ENCODE measurements at regions of chr7 and their contacts with region 1.

Region 1: GRCh38 chr7:65373608-65374351 is at the start of gene ZNF92:
- DNase-seq: peak; percentile 99
- H3K4me3 Mint-ChIP-seq: peak within 1 kb of the TSS; percentile 94
- H3K27ac Mint-ChIP-seq: peak within 1 kb of the TSS; percentile 90
- H3K4me1 Mint-ChIP-seq: peaks cover 32% of the 10 kb centered on the region
- H3K27me3 Mint-ChIP-seq: no peaks in the 10 kb centered on the region
- total RNA-seq, gene ZNF92: 13.6 to 15.5 TPM

Region 2: GRCh38 chr7:63900394-63901203 is 1473.2 kb before region 1 on chr7:
- CTCF ChIA-PET with region 1: no interaction called
- intact Hi-C with region 1: loop called (anchors 2 kb)
- DNase-seq: peak; percentile 95
- H3K4me3 Mint-ChIP-seq: peak overlapping the region; percentile 93
- H3K27ac Mint-ChIP-seq: peak overlapping the region; percentile 77
- H3K4me1 Mint-ChIP-seq: peaks cover 8% of the 10 kb centered on the region
- H3K27me3 Mint-ChIP-seq: no peaks in the 10 kb centered on the region

Region 3: GRCh38 chr7:64665980-64666662 is 707.7 kb before region 1 on chr7 and contains the start of gene ZNF107:
- CTCF ChIA-PET with region 1: no interaction called
- intact Hi-C with region 1: loop called (anchors 5 kb)
- DNase-seq: peak; percentile 93
- H3K4me3 Mint-ChIP-seq: peak within 1 kb of the TSS; percentile 95
- H3K27ac Mint-ChIP-seq: peak within 1 kb of the TSS; percentile 96
- H3K4me1 Mint-ChIP-seq: peaks cover 47% of the 10 kb centered on the region
- H3K27me3 Mint-ChIP-seq: no peaks in the 10 kb centered on the region
- total RNA-seq, gene ZNF107: 7.7 to 8.0 TPM

Region 4: GRCh38 chr7:65006094-65006992 is 367.4 kb before region 1 on chr7 and contains the start of gene ERV3-1:
- CTCF ChIA-PET with region 1: no interaction called
- intact Hi-C with region 1: loop called (anchors 1 kb)
- DNase-seq: peak; percentile 97
- H3K4me3 Mint-ChIP-seq: peak within 1 kb of the TSS; percentile 93
- H3K27ac Mint-ChIP-seq: peak within 1 kb of the TSS; percentile 85
- H3K4me1 Mint-ChIP-seq: peaks cover 28% of the 10 kb centered on the region
- H3K27me3 Mint-ChIP-seq: no peaks in the 10 kb centered on the region
- total RNA-seq, gene ERV3-1: 8.9 to 10.6 TPM

Region 5: DNA sequence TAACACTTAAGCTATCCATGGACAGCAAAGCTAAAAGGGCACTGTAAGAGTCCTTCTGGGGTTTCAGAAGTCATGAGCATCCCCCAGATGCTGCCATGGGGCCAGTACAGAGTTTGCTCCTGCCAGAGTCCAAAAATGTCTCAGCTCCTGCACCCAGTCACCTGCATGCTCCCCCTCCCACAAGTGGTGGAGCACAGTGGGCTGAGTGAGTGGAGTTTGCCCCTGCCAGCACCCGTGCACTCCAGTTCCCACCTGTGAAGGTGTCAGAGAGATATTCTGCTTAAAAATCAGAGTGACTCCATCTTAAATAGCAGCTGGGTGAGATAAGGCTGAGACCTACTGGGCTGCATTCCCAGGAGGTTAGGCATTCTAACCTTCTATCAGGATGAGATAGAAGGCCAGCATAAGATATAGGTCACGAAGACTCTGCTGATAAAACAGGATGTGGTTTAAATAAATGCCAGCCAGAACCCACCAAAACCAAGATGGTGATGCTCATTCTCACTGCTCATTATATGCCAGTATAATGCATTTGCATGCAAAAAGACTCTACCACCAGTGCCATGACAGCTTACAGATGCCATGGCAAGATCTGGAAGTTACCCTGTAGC is 140.3 kb before region 1 on chr7:
- CTCF ChIA-PET with region 1: no interaction called
- intact Hi-C with region 1: no loop called
- DNase-seq: no peak
- H3K4me3 Mint-ChIP-seq: no peak overlapping the region
- H3K27ac Mint-ChIP-seq: no peak overlapping the region
- H3K4me1 Mint-ChIP-seq: peaks cover 5% of the 10 kb centered on the region
- H3K27me3 Mint-ChIP-seq: peaks cover 8% of the 10 kb centered on the region

Region 6: GRCh38 chr7:65441010-65441409 is 67.2 kb after region 1 on chr7:
- CTCF ChIA-PET with region 1: no interaction called
- intact Hi-C with region 1: loop called (anchors 5 kb)
- DNase-seq: no peak
- H3K4me3 Mint-ChIP-seq: no peak overlapping the region
- H3K27ac Mint-ChIP-seq: no peak overlapping the region
- H3K4me1 Mint-ChIP-seq: no peaks in the 10 kb centered on the region
- H3K27me3 Mint-ChIP-seq: peaks cover 9% of the 10 kb centered on the region

Region 7: DNA sequence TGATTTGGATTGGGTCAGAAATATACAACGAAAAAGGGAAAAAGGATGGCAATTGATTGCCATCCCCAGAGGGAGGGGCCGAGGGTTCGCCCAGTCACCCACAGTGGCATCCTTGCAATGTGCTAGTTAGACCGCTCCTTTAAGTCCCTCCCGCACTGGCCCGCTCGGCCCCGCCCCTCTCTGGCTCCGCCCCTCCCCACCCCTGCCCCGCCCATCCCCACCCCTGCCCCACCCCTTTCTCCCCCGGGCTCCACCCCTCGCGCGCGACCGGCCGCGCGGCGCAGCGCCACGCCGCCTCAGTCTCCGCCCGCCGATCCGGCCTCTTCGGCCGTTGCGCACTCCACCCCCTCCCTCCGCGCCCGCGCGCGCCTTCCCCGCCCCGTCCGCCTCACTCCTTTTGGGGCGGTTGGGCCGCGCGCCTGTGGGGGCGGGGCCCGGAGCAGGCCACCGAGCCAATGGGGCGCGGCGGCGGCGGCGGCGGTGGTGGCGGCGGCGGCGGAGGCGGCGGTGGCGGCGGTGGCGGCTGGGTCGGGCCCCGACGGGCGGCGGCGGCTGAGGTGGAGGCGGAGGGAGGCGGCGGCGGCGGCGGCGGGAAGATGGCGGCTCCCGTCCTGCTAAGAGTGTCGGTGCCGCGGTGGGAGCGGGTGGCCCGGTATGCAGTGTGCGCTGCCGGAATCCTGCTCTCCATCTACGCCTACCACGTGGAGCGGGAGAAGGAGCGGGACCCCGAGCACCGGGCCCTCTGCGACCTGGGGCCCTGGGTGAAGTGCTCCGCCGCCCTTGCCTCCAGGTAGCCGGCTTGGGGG is 499.2 kb after region 1 on chr7 and contains the start of gene VKORC1L1:
- CTCF ChIA-PET with region 1: no interaction called
- intact Hi-C with region 1: loop called (anchors 5 kb)
- DNase-seq: peak; percentile 95
- H3K4me3 Mint-ChIP-seq: peak within 1 kb of the TSS; percentile 78
- H3K27ac Mint-ChIP-seq: no peak within 1 kb of the TSS
- H3K4me1 Mint-ChIP-seq: peaks cover 6% of the 10 kb centered on the region
- H3K27me3 Mint-ChIP-seq: no peaks in the 10 kb centered on the region
- total RNA-seq, gene VKORC1L1: 8.9 to 10.1 TPM